ENCODE measurements at regions of chr3 and their contacts with region 1.

Region 1: DNA sequence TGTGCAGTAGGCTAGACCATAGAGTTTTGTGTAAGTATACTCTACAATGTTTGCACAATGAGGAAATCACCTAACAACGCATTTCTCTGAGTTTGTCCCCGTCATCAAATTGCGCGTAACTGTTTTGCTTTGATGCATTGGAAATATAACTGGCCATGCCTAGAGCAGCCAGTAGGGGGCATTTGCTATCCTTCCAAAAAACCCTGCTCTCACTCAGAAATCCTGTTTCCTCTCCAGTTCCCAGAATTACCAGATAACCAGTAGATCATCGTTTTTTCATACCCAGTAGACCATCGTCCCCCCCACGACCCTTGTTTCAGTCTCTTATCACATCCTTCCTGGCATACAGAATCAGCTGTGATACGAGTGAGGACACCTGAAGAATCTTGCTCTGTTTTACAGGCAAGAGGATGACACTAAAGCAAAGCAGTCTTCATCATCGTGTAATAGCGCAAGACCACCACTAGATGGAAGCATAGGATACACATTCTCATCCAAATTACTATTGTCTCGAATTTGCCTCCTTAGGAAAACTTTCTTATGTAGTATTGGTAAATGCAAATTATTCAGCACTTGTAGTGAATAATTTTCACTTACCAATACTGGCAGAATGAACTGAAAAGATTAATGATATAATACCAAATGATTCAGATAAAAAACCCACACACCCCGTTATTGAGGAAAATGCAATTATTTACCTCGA is 4.4 kb upstream of the GABRR3 start:
- DNase-seq: peak; percentile 27 to 89 (median 66)
- ATAC-seq: peak; percentile 96
- H3K4me3 ChIP-seq: peak overlapping the region; percentile 37 to 38
- H3K4me3 Mint-ChIP-seq: peak overlapping the region; percentile 81
- H3K27ac ChIP-seq: peak overlapping the region; percentile 33 to 57
- H3K27ac Mint-ChIP-seq: peak overlapping the region; percentile 92
- H3K4me1 ChIP-seq: no peaks in the 10 kb centered on the region
- H3K4me1 Mint-ChIP-seq: peaks cover 7% of the 10 kb centered on the region
- H3K27me3 ChIP-seq: no peaks in the 10 kb centered on the region
- H3K27me3 Mint-ChIP-seq: peaks cover 22% of the 10 kb centered on the region
- CTCF ChIP-seq: peak; percentile 100

Region 2: DNA sequence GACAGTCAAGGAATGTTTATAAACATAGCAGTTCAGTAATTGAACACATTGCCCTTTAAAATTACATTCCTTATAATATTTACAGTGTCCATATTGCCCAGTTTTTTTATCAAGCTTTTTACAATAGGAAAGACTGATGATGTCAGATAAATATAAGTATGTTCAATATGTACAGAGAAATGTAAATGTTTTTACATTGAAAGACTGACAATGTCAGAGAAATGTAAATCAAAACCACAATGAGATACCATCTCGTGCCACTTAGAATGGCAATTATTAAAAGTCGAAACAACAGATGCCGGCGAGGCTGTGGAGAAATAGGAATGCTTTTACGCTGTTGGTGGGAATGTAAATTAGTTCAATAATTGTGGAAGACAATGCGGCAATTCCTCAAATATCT is 757.4 kb before region 1 on chr3:
- CTCF ChIA-PET with region 1: no interaction called
- POLR2A ChIA-PET with region 1: no interaction called
- intact Hi-C with region 1: no loop called
- DNase-seq: no peak
- ATAC-seq: no peak
- H3K4me3 ChIP-seq: no peak overlapping the region
- H3K4me3 Mint-ChIP-seq: no peak overlapping the region
- H3K27ac ChIP-seq: no peak overlapping the region
- H3K27ac Mint-ChIP-seq: no peak overlapping the region
- H3K4me1 ChIP-seq: no peaks in the 10 kb centered on the region
- H3K4me1 Mint-ChIP-seq: no peaks in the 10 kb centered on the region
- H3K27me3 ChIP-seq: no peaks in the 10 kb centered on the region
- H3K27me3 Mint-ChIP-seq: no peaks in the 10 kb centered on the region
- CTCF ChIP-seq: no peak

Region 3: DNA sequence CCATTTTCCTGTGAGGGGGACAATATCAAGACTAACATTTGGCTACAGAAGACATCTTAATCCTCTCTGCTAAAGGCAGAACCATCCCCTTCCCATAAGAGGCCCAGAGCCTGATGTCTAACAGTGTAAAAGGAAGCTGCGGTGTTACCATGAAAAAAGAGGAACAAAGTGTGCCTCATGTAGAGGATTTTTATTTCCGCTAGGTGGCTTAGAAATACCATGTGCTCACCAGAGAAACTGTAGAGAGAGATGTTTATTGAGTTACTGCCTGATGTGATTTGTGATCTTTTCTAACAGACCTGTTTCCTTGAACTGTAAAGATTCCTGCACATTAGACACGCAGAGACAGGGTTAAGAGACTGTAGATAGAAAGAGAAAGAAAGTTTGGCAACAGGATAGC is 149.1 kb after region 1 on chr3:
- CTCF ChIA-PET with region 1: no interaction called
- POLR2A ChIA-PET with region 1: no interaction called
- intact Hi-C with region 1: no loop called
- DNase-seq: peak in 2 of 9 experiments; percentile 0 to 14
- ATAC-seq: no peak
- H3K4me3 ChIP-seq: no peak overlapping the region
- H3K4me3 Mint-ChIP-seq: no peak overlapping the region
- H3K27ac ChIP-seq: no peak overlapping the region
- H3K27ac Mint-ChIP-seq: no peak overlapping the region
- H3K4me1 ChIP-seq: no peaks in the 10 kb centered on the region
- H3K4me1 Mint-ChIP-seq: no peaks in the 10 kb centered on the region
- H3K27me3 ChIP-seq: no peaks in the 10 kb centered on the region
- H3K27me3 Mint-ChIP-seq: peaks cover 7% of the 10 kb centered on the region
- CTCF ChIP-seq: no peak

Region 4: DNA sequence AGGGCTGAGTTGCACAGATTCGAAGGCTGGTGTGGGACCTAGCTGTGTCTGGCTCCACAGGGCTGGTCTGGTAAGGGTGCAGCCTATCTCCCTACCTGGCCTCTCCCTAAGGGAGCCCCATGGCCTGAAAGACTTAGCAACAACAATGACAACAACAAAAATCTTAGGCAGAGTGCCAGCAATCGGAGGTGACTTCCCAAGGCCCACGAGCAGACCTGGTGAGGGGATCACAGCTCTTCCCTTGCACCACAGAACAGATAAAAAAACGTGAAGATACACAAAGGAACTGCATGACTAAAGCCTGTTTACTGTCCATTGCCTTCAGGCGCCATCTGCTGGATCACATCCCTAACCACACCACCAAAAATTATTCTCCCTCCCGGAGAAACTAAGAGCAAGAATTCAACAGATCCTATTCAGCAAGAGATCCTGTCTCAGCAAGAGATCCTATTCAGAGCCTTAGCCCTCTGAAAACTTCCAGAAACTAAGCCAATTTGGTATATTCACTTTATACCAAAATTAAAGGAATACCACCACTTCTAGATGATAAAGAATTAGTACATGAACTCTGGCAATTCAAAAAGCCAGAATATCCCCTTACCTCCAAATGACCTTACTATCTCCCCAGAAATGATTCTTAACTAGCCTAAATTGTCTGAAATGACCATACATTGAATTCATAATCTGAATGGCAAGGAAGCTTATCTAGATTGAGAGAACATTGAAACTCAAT is 290.1 kb after region 1 on chr3:
- CTCF ChIA-PET with region 1: interaction called, 24 read pairs
- POLR2A ChIA-PET with region 1: no interaction called
- intact Hi-C with region 1: loop called (anchors 1 kb)
- DNase-seq: peak in 7 of 9 experiments; percentile 10 to 62 (median 37)
- ATAC-seq: peak; percentile 74
- H3K4me3 ChIP-seq: no peak overlapping the region
- H3K4me3 Mint-ChIP-seq: no peak overlapping the region
- H3K27ac ChIP-seq: no peak overlapping the region
- H3K27ac Mint-ChIP-seq: no peak overlapping the region
- H3K4me1 ChIP-seq: no peaks in the 10 kb centered on the region
- H3K4me1 Mint-ChIP-seq: peaks cover 3% of the 10 kb centered on the region
- H3K27me3 ChIP-seq: no peaks in the 10 kb centered on the region
- H3K27me3 Mint-ChIP-seq: peaks cover 21% of the 10 kb centered on the region
- CTCF ChIP-seq: peak; percentile 66

Region 5: DNA sequence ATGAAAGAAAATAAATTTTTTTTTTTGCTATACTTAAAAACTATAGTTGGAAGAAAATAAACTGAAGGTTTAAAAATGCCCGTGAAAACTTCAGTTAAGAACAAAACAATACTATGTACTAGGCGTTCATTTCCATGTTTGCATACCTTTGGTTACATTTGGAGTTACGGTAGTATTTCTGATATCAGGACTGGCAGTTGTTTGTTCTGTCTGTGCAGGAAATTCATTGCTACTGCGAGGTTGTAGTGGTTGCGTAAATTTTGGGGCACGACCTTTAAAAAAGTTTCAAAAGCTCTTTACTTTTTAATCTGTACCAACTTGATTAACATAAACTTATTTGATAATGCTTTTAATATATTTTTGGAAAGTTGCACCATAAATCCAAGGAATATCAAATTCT is 771.6 kb after region 1 on chr3:
- CTCF ChIA-PET with region 1: interaction called, 8 read pairs
- POLR2A ChIA-PET with region 1: no interaction called
- intact Hi-C with region 1: loop called (anchors 1 to 2 kb)
- DNase-seq: no peak
- ATAC-seq: no peak
- H3K4me3 ChIP-seq: no peak overlapping the region
- H3K4me3 Mint-ChIP-seq: no peak overlapping the region
- H3K27ac ChIP-seq: no peak overlapping the region
- H3K27ac Mint-ChIP-seq: no peak overlapping the region
- H3K4me1 ChIP-seq: no peaks in the 10 kb centered on the region
- H3K4me1 Mint-ChIP-seq: no peaks in the 10 kb centered on the region
- H3K27me3 ChIP-seq: no peaks in the 10 kb centered on the region
- H3K27me3 Mint-ChIP-seq: no peaks in the 10 kb centered on the region
- CTCF ChIP-seq: no peak

Measured in CD8-positive, alpha-beta T cell (primary cell).